Tibial artery (tissue), 4 donors: ENCODE measurements at regions of chr2 and their contacts with region 1.

Region 1: GRCh38 chr2:130797493-130798435 is 39.0 kb upstream of the ARHGEF4 start:
- DNase-seq: peak; percentile 82 to 93
- H3K4me3 ChIP-seq: peak overlapping the region; percentile 60 to 72
- H3K27ac ChIP-seq: peak overlapping the region; percentile 88 to 96
- H3K4me1 ChIP-seq: peaks cover 0 to 16% (median 11%) of the 10 kb centered on the region in 4 donors
- H3K27me3 ChIP-seq: no peaks in the 10 kb centered on the region
- CTCF ChIP-seq: peak; percentile 88 to 91

Region 2: DNA sequence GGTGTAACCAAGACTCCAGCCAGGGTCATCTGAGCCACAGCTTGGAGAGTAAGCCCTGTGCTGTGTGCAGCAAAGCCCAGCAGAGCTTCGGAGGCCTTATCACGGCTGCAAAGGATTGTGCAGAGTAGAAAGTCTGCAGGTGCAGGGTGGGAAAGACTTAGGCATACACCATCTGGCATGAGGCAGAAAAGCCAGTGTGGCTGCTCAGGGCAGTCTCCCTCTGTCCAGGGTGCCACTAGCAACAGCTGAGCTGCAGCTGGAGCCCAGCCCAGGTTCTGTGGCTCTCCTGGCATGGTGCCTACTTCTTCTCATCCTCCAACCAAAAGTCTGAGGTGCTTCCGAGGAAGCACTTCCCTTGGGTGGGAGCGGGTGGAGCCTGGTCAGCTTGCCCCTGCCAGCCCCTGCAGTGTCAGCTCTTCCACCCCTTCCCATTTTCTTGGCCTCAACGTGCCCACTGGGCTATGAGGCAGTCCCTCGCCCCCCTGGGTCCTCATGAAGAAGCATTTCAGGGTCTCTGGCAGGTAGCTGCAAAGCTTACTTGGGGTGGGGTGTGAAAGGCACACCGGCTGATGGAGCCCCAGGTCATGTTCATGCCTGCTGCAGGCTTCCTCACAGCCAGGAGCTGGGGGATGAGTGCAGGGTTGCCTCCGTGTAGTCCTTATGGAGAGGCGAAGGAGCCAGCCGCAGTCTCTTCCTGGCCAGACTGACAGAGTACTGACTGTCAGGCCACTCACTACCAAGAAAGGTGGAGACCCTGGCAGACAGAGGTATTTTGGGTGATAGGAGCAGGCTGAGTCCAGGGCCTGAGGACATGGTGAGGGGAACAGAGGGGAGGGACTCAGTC is 37.6 kb before region 1 on chr2:
- intact Hi-C with region 1: no loop called
- DNase-seq: no peak
- H3K4me3 ChIP-seq: no peak overlapping the region
- H3K27ac ChIP-seq: no peak overlapping the region
- H3K4me1 ChIP-seq: peaks cover 0 to 13% (median 3%) of the 10 kb centered on the region in 4 donors
- H3K27me3 ChIP-seq: peaks cover 0 to 69% of the 10 kb centered on the region in 2 donors
- CTCF ChIP-seq: no peak

Region 3: DNA sequence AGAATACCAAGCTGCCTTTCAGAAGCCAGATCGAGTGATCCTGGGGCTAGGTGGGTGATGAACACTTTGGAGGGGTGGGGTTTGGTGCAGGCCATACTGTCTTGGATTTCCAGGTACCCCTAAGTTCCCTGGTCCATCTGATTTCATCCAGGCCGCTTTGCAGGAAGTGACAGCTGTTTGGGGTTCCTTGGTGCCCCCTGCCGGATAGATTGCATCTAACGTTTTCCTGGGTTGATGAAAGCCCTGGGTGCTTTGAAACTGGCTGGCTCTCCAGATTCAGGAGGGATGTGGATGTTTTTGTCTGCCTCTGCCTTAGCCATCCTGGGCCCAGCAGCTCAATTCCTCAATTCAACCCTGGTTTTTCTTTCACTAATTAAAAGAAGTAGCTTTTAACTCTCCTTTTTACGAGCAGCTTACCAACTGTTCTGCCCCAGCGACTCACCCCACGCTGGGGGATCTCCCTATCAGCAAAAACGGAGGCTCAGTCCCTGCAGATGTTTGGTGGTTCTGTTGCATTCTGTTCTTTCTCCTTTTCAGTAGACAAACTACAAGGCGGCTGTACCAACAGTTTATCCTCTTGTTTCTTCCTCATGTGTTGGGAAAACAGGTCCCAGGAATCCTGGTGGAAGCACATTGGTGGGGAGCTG is 76.1 kb after region 1 on chr2:
- intact Hi-C with region 1: loop called (anchors 2 kb)
- DNase-seq: peak; percentile 71 to 78
- H3K4me3 ChIP-seq: no peak overlapping the region
- H3K27ac ChIP-seq: no peak overlapping the region
- H3K4me1 ChIP-seq: no peaks in the 10 kb centered on the region
- H3K27me3 ChIP-seq: peaks cover 0 to 12% of the 10 kb centered on the region in 2 donors
- CTCF ChIP-seq: peak; percentile 65 to 76

Region 4: DNA sequence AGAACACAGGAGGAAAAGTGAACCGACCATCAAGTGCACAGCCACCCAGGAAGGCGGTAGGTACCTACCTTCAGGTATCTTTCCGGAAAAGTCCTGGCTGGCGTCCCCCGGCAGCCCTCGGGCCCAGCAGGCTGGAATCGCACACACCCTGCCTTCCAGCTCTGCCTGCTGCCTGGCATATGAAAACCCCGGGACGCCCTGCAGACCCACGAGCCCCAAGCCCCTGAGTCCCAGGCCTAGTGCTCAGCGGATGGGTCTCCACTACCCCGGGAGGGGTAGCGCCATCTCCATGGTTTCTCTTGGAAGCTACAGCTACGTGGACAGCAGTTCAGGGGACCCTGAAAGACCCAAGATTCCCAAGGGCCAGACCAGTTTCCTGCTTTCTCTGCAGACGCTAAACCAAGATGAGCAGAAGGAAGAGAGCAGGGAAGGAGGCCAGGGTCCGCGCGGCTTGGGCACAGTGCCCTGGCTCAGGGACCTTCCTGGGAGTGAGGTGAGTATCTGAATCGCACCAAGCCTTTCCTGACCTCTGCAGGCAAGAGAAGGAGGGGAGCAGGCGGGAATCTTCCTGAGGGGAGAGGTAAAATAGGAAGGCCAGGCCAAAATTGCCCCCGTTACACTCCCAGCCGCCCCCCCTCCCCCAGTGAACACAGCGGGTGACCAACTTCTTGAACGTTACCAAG is 119.4 kb after region 1 on chr2:
- intact Hi-C with region 1: loop called (anchors 5 kb)
- DNase-seq: no peak
- H3K4me3 ChIP-seq: no peak overlapping the region
- H3K27ac ChIP-seq: no peak overlapping the region
- H3K4me1 ChIP-seq: no peaks in the 10 kb centered on the region
- H3K27me3 ChIP-seq: peaks cover 0 to 45% of the 10 kb centered on the region in 2 donors
- CTCF ChIP-seq: no peak